Right ventricle myocardium inferior (tissue), 1 donor: ENCODE measurements at regions of chr9 and their contacts with region 1.

Region 1: DNA sequence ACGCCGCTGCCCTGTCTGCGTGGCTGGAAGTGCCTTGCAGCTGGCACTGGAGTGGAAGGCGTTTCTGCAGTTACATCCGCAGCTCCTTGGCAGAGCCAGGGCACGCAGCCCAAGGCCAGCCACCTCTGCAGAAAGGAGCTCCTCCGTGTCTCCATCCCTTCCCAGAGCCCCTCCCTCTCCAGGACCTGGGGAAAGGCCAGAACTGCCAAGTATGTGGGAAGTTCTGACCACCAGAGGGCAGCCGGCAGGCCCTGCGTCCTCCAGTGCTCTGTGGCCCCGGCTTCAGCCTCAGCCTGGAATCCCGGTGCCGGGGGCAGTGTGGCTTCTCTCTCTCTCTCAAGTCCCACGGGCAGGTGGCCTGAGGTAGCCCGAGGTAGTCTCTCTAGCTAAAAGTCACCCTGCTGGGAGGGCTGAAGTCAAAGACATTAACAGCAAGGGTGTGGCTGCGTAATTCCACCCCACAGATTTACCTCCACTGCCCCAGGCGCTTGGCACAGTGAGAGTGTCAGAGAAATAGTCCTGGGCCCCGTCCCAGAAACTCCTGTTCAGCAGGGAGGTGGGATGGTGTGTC is 101.7 kb upstream of the FCN2 start:
- DNase-seq: no peak
- ATAC-seq: peak; percentile 39

Region 2: DNA sequence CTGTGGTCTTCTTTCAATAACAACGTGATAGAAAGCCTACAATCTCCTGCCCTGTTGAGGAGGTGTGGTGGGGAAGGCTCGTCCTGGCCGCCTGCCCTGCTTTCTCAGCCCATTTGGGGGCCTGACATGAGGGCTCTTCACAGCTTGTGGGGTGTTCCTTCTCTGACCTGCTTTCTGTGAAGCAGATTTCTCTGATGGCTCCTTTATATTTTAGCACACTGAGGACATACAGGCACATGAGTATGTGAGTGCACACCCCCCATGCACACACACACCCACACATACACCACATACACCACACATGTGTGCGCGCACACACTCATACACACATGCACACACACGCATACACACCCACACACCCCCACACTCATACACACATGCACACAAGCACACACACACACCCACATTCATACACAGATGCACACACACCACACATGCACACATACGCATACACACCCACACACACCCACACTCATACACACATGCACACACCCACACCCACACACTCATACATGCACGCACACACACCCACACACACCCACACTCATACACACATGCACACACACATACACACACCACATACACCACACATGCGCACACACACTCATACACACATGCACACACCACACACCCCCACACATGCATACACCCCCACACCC is 19.8 kb before region 1 on chr9:
- intact Hi-C with region 1: no loop called
- DNase-seq: no peak
- ATAC-seq: no peak

Region 3: GRCh38 chr9:134814598-134815220 is 35.8 kb after region 1 on chr9:
- intact Hi-C with region 1: no loop called
- DNase-seq: no peak
- ATAC-seq: no peak

Region 4: DNA sequence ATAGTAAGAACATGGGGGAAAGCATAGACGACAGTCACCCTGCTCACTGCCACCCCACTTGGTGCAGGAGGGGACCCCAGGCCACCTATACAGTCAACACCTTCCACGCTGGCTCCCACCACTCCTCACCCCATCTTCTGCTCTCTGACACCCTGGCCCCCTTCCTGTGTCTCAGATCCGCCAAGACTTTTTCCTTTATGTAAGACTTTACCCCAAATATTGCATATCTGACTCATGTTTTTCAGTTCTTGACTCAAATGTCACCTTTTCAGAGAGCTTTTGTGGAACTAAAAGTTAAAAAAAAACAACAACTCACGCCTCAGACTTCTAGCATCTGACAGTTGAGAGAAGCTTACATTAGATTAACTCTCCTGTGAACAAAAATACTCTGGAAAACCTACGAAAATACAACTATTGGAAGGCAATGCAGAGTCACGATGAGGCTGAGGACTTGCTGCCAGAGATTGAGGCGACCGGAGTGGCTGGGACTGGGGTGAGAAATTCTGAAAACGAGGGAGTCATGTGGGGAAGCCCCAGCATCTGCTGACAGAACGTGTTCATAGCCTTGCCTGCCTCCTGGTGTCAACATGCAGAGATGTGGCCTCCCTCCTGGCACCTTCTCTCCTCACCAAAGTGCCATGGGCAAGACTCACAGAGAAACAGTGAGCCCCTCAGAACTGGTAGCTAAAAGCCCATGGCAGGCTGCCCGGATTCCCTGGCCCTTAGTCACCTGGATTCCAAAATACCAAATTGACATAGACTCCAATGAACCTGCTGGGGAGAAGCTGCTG is 79.3 kb after region 1 on chr9:
- intact Hi-C with region 1: no loop called
- DNase-seq: no peak
- ATAC-seq: no peak

Region 5: DNA sequence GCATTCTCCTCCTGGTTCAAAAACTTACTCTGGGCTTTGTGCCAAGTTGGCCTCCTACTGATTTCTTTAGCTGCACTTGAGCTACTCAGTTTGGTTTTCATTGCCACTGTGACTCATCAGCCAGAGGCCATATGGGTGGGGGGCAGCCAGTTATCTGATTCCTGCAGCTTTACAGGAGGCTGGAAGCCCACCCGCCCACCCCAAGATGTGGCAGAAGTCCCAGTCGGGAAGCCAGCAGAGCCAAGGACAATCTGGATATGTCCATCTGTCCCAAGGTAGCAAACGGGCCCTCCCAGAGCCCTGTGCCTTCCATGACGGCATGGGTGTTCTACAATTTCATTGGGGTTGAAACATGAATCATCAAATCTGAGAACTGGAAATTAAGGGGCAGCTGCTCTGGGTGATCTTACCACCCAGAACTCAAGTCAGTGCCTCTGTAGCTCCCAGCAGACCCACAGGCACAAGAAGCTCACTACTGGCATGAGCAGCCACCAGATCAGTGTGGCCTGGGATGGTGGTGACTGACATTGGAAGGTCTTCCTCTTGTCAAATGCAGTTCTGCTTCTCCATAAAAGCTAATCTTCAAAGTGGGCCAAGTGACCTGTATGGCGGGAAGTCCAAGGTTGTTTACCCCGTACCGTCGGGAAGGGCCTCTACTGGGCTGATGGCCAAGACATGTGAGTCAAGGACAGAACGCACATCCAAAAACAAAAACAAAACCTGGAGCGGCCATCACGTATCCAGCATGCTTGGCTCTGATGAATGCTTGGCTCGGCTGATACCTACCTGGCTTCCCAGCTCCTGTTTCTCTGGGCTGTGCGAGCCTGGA is 117.3 kb after region 1 on chr9:
- intact Hi-C with region 1: loop called (anchors 2 kb)
- DNase-seq: no peak
- ATAC-seq: peak; percentile 76

Region 6: GRCh38 chr9:134983074-134983473 is 204.1 kb after region 1 on chr9:
- intact Hi-C with region 1: loop called (anchors 2 kb)
- DNase-seq: peak; percentile 80
- ATAC-seq: peak; percentile 61

Region 7: GRCh38 chr9:135077497-135078200 is 298.7 kb after region 1 on chr9:
- intact Hi-C with region 1: loop called (anchors 5 kb)
- DNase-seq: no peak
- ATAC-seq: no peak